Activated CD8-positive, alpha-beta T cell treated with anti-CD3 and anti-CD28 coated beads, Interleukin-2, amount 10 ng/mL, durations not matched to agents 7 days and 5 days (primary cell): ENCODE measurements at regions of chr1 and their contacts with region 1.

Region 1: DNA sequence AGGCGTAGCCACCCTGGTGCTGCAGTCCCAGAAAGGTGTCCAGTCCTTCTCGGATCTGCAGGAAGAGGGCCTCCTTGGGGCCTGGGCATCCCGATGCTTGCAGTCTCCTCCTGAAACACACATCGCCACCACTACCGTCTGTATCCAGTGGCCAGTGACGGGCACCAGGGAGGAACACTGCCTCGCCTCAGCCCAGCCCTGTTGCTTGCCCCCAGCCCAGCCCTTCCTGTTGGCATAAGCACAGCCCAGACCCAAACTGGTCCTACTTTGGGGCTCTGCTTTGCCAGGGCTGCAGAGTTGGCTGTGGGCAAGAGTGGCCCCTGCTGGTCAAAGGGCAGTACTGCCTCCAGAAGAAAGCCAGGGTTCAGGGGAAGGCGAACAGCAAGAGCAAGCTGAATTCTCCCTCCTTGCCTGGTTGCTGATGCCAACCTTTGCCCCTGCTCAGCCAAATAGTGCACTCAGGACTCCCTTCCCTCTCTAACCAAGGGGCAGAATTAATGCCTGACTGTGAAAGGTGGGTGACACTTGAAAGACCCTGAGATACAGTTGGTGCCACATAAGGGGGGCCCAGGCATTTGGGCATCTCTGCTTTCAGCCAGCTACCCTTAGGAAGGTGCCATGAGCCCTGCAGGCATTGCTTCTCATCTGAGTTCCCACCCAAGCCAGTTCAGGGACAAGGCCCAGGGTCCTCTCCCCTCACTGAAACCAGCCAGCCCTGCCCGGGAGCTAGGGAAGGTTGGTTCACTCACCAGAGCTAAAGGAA is 11.1 kb upstream of the ARHGEF2 start:
- DNase-seq: peak; percentile 85
- ATAC-seq: peak; percentile 98
- H3K4me3 Mint-ChIP-seq: no peak overlapping the region
- H3K27ac Mint-ChIP-seq: peak overlapping the region; percentile 44
- H3K4me1 Mint-ChIP-seq: peaks cover 19% of the 10 kb centered on the region
- H3K27me3 Mint-ChIP-seq: no peaks in the 10 kb centered on the region

Region 2: GRCh38 chr1:155904266-155904665 is 85.2 kb before region 1 on chr1:
- CTCF ChIA-PET with region 1: interaction called, 10 read pairs
- POLR2A ChIA-PET with region 1: no interaction called
- DNase-seq: no peak
- ATAC-seq: no peak
- H3K4me3 Mint-ChIP-seq: no peak overlapping the region
- H3K27ac Mint-ChIP-seq: no peak overlapping the region
- H3K4me1 Mint-ChIP-seq: peaks cover 9% of the 10 kb centered on the region
- H3K27me3 Mint-ChIP-seq: no peaks in the 10 kb centered on the region

Region 3: DNA sequence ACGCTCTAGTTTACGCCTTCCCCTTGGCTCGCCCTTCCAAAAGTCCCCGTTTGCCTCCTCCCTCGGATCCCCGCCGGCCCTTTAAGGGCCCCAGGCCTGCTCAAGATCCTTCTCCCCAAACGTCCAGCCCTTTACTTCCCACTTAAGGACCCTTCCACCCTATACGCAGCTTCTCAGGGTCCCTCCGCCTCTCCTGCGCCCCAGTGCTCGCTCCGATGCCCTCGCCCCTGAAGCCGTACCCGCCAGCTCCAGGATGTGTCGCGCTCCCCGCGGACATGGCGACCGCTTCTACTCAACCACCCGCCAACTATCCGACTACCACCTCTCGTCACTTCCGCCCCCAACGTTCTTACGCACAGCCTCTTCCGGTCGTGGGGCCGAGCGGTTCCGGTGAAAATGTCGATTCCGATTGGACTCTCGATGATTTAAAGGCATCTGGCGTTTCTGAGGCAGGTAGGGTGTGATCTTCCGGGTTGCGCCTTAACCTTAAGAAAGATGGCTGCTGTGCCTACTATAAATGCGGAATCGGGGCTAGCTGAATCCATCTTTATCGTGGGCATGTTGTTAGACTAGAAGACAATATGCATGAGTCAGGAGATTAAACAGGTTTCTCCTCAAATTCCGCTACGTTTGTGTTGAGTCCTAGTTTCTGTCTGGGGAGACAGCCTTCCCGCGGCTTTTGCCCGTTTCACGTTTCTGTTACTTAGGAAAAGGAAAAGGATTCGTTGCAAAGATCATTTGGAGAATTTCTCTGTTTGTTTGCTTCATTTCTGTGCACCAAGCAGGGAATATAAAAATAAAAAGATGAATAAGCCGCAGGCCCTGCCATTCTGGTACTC is 55.1 kb before region 1 on chr1 and contains the start of gene KHDC4:
- CTCF ChIA-PET with region 1: interaction called, 144 read pairs
- POLR2A ChIA-PET with region 1: interaction called, 14 read pairs
- DNase-seq: peak; percentile 98
- ATAC-seq: peak; percentile 94
- H3K4me3 Mint-ChIP-seq: no peak within 1 kb of the TSS
- H3K27ac Mint-ChIP-seq: no peak within 1 kb of the TSS
- H3K4me1 Mint-ChIP-seq: peaks cover 44% of the 10 kb centered on the region
- H3K27me3 Mint-ChIP-seq: no peaks in the 10 kb centered on the region
- total RNA-seq, gene KHDC4: 64.5 to 68.9 TPM

Region 4: GRCh38 chr1:155970531-155971167 is 18.8 kb before region 1 on chr1:
- CTCF ChIA-PET with region 1: interaction called, 135 read pairs
- POLR2A ChIA-PET with region 1: interaction called, 4 read pairs
- DNase-seq: peak; percentile 38
- ATAC-seq: peak; percentile 34
- H3K4me3 Mint-ChIP-seq: peak overlapping the region; percentile 23
- H3K27ac Mint-ChIP-seq: peak overlapping the region; percentile 86
- H3K4me1 Mint-ChIP-seq: peaks cover 98% of the 10 kb centered on the region
- H3K27me3 Mint-ChIP-seq: no peaks in the 10 kb centered on the region

Region 5: DNA sequence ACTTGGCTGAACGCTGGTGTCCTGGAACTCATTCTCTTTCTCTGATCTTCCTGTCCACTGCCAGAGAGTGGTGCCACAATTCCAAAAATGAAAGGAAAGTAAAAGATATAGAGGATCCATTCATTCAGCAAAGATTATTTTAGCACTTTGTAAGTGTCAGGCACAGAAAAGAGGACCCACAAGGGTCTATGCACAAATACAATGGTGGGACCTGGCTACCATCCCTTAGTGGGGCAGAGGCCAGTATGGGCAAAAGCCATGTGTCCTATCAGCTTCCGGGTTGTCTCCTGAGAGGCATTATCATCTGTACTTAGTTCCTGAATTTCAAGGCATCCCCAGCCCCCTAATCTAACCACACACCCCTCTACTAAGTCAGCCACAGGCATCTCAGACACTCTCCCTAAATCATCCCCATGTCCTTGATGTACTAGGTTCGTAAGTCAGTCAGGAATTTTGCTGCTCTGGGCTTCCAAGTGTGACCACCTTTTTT is 12.3 kb after region 1 on chr1:
- CTCF ChIA-PET with region 1: interaction called, 18 read pairs
- POLR2A ChIA-PET with region 1: no interaction called
- DNase-seq: no peak
- ATAC-seq: no peak
- H3K4me3 Mint-ChIP-seq: no peak overlapping the region
- H3K27ac Mint-ChIP-seq: no peak overlapping the region
- H3K4me1 Mint-ChIP-seq: peaks cover 31% of the 10 kb centered on the region
- H3K27me3 Mint-ChIP-seq: no peaks in the 10 kb centered on the region

Region 6: GRCh38 chr1:156065212-156065611 is 75.8 kb after region 1 on chr1:
- CTCF ChIA-PET with region 1: interaction called, 28 read pairs
- POLR2A ChIA-PET with region 1: no interaction called
- DNase-seq: no peak
- ATAC-seq: no peak
- H3K4me3 Mint-ChIP-seq: no peak overlapping the region
- H3K27ac Mint-ChIP-seq: no peak overlapping the region
- H3K4me1 Mint-ChIP-seq: peaks cover 10% of the 10 kb centered on the region
- H3K27me3 Mint-ChIP-seq: no peaks in the 10 kb centered on the region